Endothelial cell of umbilical vein (primary cell): ENCODE measurements at regions of chr1 and their contacts with region 1.

Region 1: DNA sequence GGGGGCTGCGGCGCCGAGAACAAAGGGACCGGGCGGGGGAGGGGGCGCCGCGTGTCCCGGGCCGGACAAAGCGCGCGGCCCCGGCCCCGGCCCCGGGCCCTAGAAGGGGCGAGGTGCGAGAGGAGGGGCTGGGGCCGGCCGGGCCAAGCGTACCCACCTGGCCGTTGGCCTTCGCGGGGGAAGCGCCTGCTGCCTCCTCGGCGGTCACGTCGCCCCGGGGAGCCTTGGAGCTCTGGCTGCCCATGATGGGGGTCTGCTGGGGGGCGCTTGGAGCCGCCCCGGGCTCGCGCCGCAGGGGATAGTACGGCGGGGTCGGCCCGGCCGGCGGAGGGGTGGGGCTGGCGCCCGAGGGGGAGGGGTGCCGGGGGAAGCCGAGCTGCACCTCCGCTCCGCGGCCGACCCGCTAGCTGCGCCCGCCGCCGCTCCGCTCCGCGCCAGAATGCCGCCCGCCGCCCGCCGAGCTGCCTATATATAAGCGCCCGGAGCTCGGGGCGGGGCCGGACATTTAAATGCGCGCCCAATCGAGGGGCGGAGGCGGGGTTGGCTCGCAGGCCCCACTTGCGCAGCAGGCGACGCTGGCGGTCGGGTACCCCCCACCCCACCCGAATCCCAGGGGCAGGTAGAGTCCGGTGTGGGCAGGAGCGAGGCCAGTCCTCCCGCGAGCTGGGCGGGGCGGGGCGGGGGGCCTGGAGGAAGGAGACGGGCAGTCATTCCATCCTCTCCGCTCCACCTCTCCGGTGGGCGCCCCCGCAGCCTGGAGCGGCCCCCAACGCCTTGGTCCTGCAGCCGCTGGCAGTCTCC is at the start of gene MARCKSL1:
- DNase-seq: peak; percentile 75
- H3K4me3 ChIP-seq: peak within 1 kb of the TSS; percentile 28 to 87 (median 80)
- H3K27ac ChIP-seq: peak within 1 kb of the TSS; percentile 49
- H3K4me1 ChIP-seq: peaks cover 14% of the 10 kb centered on the region
- H3K27me3 ChIP-seq: no peaks in the 10 kb centered on the region
- CTCF ChIP-seq: no peak
- POLR2A ChIP-seq: peak; percentile 98
- total RNA-seq, gene MARCKSL1: 249 and 265 TPM in 2 replicates

Region 2: DNA sequence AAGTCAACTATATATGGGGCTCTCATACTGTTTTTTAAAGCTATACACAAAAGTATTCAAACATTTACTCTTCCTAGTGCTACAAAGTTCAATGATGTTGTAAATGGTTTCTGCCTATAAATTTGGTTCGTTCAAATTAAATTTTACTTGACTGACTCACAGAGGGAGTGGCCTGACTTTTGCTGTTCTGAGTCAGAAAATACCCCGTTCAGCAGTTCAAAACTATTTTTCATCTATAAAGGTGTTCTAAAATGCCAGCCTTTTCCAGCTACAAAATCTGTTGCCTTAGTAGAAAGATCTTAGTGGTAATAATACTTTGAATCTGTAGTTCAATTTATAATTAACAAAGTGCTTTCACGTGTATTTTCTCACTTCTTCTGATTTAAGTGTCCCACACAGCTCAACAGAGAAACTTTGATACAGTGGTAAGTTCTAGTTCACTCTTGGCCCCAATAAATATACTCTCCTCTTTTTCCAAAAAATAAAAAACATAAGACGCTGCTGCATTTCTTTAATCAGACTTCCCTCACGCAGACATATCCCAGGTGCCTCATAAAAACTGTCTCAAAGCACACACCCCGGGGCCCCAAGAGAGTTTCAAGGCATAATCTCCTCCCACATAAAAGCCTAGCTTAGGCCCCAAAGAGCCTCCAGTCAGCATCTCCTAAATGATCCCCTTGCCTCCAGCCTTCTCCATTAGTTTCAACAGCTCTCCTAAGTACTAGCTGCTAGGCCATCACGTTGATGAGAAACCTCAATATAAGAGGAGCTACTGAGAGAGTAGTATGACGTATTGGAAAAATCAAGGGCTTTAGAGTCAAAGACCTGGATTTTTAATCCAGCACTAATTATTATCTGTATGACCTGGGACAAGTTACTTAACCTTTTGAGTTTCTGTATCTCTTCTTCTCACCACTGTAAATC is 401.0 kb before region 1 on chr1:
- CTCF ChIA-PET with region 1: no interaction called
- POLR2A ChIA-PET with region 1: no interaction called
- dilution Hi-C with region 1: no loop called
- intact Hi-C with region 1: no loop called
- DNase-seq: peak; percentile 58
- H3K4me3 ChIP-seq: peak overlapping the region in 1 of 3 experiments; percentile 34
- H3K27ac ChIP-seq: peak overlapping the region; percentile 58
- H3K4me1 ChIP-seq: peaks cover 70% of the 10 kb centered on the region
- H3K27me3 ChIP-seq: no peaks in the 10 kb centered on the region
- CTCF ChIP-seq: no peak
- POLR2A ChIP-seq: no peak

Region 3: DNA sequence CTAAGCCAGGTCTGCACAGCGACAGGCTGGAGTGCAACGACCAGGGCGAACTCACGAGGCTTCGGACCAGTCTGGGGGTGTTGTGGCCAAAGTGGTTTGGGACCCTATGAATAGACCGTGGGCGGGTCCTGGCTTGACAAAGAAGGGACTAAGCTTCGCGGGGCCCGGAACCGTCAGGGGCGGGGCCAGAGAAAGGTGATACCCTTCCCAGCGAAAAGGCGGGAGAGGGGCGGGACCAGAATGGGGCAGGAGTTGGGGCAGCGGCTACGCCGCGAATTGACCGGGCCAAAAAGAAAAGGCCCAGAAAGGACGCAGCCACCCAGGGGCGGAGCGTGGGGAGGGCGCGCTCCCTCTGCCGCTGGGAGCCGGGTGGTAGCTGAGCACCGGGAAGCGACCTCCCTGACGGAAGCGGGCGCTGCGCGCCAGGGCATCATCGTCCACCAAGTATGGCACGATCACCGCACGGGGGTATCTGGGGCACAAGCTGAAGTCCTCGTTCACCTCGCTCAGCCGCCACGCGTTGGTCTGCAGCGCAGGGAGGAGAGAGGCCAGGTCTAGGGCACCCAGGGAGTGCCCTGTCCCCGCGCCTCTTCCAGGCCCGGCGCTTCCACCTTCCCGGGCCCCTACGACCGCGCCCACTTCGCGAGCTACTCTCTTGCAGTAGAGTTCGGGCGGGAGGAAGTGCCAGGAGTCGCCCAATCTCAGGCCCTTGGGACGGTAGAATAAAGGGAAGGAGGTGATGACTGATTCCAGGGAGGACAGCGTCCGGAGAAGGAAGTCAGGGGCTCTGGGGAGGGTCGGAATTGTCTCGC is 95.6 kb before region 1 on chr1:
- CTCF ChIA-PET with region 1: interaction called, 4 read pairs
- POLR2A ChIA-PET with region 1: interaction called, 25 read pairs
- dilution Hi-C with region 1: no loop called
- intact Hi-C with region 1: no loop called
- DNase-seq: peak; percentile 35
- H3K4me3 ChIP-seq: peak overlapping the region; percentile 50 to 81 (median 76)
- H3K27ac ChIP-seq: peak overlapping the region; percentile 70
- H3K4me1 ChIP-seq: peaks cover 32% of the 10 kb centered on the region
- H3K27me3 ChIP-seq: no peaks in the 10 kb centered on the region
- CTCF ChIP-seq: peak in 1 of 2 donors; percentile 36
- POLR2A ChIP-seq: peak; percentile 58

Region 4: GRCh38 chr1:32351399-32352238 is 15.6 kb after region 1 on chr1:
- CTCF ChIA-PET with region 1: interaction called, 12 read pairs
- POLR2A ChIA-PET with region 1: interaction called, 50 read pairs
- dilution Hi-C with region 1: no loop called
- intact Hi-C with region 1: loop called (anchors 1 kb)
- DNase-seq: peak; percentile 91
- H3K4me3 ChIP-seq: peak overlapping the region; percentile 36 to 56 (median 55)
- H3K27ac ChIP-seq: peak overlapping the region; percentile 77
- H3K4me1 ChIP-seq: peaks cover 34% of the 10 kb centered on the region
- H3K27me3 ChIP-seq: no peaks in the 10 kb centered on the region
- CTCF ChIP-seq: peak in 1 of 2 donors; percentile 11
- POLR2A ChIP-seq: peak; percentile 80

Region 5: GRCh38 chr1:32394141-32394889 is 58.3 kb after region 1 on chr1 and contains the start of gene BSDC1:
- CTCF ChIA-PET with region 1: no interaction called
- POLR2A ChIA-PET with region 1: interaction called, 21 read pairs
- dilution Hi-C with region 1: no loop called
- intact Hi-C with region 1: loop called (anchors 2 kb)
- DNase-seq: peak; percentile 99
- H3K4me3 ChIP-seq: peak within 1 kb of the TSS; percentile 56 to 76 (median 65)
- H3K27ac ChIP-seq: peak within 1 kb of the TSS; percentile 60
- H3K4me1 ChIP-seq: peaks cover 15% of the 10 kb centered on the region
- H3K27me3 ChIP-seq: no peaks in the 10 kb centered on the region
- CTCF ChIP-seq: no peak
- POLR2A ChIP-seq: no peak
- total RNA-seq, gene BSDC1: 64.6 and 64.8 TPM in 2 replicates

Region 6: GRCh38 chr1:32485554-32486255 is 149.7 kb after region 1 on chr1:
- CTCF ChIA-PET with region 1: no interaction called
- POLR2A ChIA-PET with region 1: no interaction called
- dilution Hi-C with region 1: no loop called
- intact Hi-C with region 1: no loop called
- DNase-seq: no peak
- H3K4me3 ChIP-seq: no peak overlapping the region
- H3K27ac ChIP-seq: no peak overlapping the region
- H3K4me1 ChIP-seq: no peaks in the 10 kb centered on the region
- H3K27me3 ChIP-seq: peaks cover 0 to 1% of the 10 kb centered on the region in 2 experiments
- CTCF ChIP-seq: no peak
- POLR2A ChIP-seq: no peak